Gastrocnemius medialis (tissue), 4 donors: ENCODE measurements at regions of chr4 and their contacts with region 1.

Region 1: GRCh38 chr4:29900336-29900735 is 819.8 kb upstream of the PCDH7 start:
- DNase-seq: no peak
- ATAC-seq: no peak
- H3K4me3 ChIP-seq: no peak overlapping the region
- H3K27ac ChIP-seq: no peak overlapping the region
- H3K4me1 ChIP-seq: no peaks in the 10 kb centered on the region
- H3K27me3 ChIP-seq: no peaks in the 10 kb centered on the region
- CTCF ChIP-seq: no peak
- POLR2A ChIP-seq: no peak

Region 2: GRCh38 chr4:29853833-29854232 is 46.5 kb before region 1 on chr4:
- in situ Hi-C with region 1: loop called in 1 of 4 experiments (anchors 10 kb)
- intact Hi-C with region 1: no loop called
- DNase-seq: no peak
- ATAC-seq: no peak
- H3K4me3 ChIP-seq: no peak overlapping the region
- H3K27ac ChIP-seq: no peak overlapping the region
- H3K4me1 ChIP-seq: no peaks in the 10 kb centered on the region
- H3K27me3 ChIP-seq: no peaks in the 10 kb centered on the region
- CTCF ChIP-seq: no peak
- POLR2A ChIP-seq: no peak

Region 3: GRCh38 chr4:29867412-29867811 is 32.9 kb before region 1 on chr4:
- in situ Hi-C with region 1: no loop called
- intact Hi-C with region 1: no loop called
- DNase-seq: no peak
- ATAC-seq: no peak
- H3K4me3 ChIP-seq: no peak overlapping the region
- H3K27ac ChIP-seq: no peak overlapping the region
- H3K4me1 ChIP-seq: no peaks in the 10 kb centered on the region
- H3K27me3 ChIP-seq: no peaks in the 10 kb centered on the region
- CTCF ChIP-seq: no peak
- POLR2A ChIP-seq: no peak

Region 4: GRCh38 chr4:29970626-29971025 is 70.3 kb after region 1 on chr4:
- in situ Hi-C with region 1: no loop called
- intact Hi-C with region 1: no loop called
- DNase-seq: no peak
- ATAC-seq: no peak
- H3K4me3 ChIP-seq: no peak overlapping the region
- H3K27ac ChIP-seq: no peak overlapping the region
- H3K4me1 ChIP-seq: no peaks in the 10 kb centered on the region
- H3K27me3 ChIP-seq: no peaks in the 10 kb centered on the region
- CTCF ChIP-seq: no peak
- POLR2A ChIP-seq: no peak

Region 5: GRCh38 chr4:30901461-30902451 is 1001.4 kb after region 1 on chr4:
- in situ Hi-C with region 1: no loop called
- intact Hi-C with region 1: no loop called
- DNase-seq: no peak
- ATAC-seq: no peak
- H3K4me3 ChIP-seq: no peak overlapping the region
- H3K27ac ChIP-seq: no peak overlapping the region
- H3K4me1 ChIP-seq: no peaks in the 10 kb centered on the region
- H3K27me3 ChIP-seq: no peaks in the 10 kb centered on the region
- CTCF ChIP-seq: no peak
- POLR2A ChIP-seq: no peak